ENCODE measurements at regions of chr9 and their contacts with region 1.

Region 1: GRCh38 chr9:121852651-121853616 is 201.5 kb downstream of the DAB2IP start:
- DNase-seq: peak; percentile 91 to 95 (median 94)
- H3K4me3 ChIP-seq: no peak overlapping the region
- H3K27ac ChIP-seq: peak overlapping the region; percentile 83 to 97
- H3K4me1 ChIP-seq: peaks cover 29% of the 10 kb centered on the region
- H3K27me3 ChIP-seq: no peaks in the 10 kb centered on the region
- CTCF ChIP-seq: no peak
- EP300 ChIP-seq: no peak
- POLR2A ChIP-seq: peak; percentile 34

Region 2: GRCh38 chr9:121686930-121687541 is 165.9 kb before region 1 on chr9:
- intact Hi-C with region 1: loop called in 1 of 4 experiments (anchors 10 kb)
- DNase-seq: peak; percentile 74 to 88 (median 87)
- H3K4me3 ChIP-seq: no peak overlapping the region
- H3K27ac ChIP-seq: peak overlapping the region in 1 of 2 donors; percentile 11
- H3K4me1 ChIP-seq: peaks cover 9% of the 10 kb centered on the region
- H3K27me3 ChIP-seq: no peaks in the 10 kb centered on the region
- CTCF ChIP-seq: peak; percentile 84 to 90 (median 89)
- EP300 ChIP-seq: no peak
- POLR2A ChIP-seq: no peak